Activated B cell treated with CpG ODN at 0.5 μM for 24 hours (primary cell): ENCODE measurements at regions of chr16 and their contacts with region 1.

Region 1: DNA sequence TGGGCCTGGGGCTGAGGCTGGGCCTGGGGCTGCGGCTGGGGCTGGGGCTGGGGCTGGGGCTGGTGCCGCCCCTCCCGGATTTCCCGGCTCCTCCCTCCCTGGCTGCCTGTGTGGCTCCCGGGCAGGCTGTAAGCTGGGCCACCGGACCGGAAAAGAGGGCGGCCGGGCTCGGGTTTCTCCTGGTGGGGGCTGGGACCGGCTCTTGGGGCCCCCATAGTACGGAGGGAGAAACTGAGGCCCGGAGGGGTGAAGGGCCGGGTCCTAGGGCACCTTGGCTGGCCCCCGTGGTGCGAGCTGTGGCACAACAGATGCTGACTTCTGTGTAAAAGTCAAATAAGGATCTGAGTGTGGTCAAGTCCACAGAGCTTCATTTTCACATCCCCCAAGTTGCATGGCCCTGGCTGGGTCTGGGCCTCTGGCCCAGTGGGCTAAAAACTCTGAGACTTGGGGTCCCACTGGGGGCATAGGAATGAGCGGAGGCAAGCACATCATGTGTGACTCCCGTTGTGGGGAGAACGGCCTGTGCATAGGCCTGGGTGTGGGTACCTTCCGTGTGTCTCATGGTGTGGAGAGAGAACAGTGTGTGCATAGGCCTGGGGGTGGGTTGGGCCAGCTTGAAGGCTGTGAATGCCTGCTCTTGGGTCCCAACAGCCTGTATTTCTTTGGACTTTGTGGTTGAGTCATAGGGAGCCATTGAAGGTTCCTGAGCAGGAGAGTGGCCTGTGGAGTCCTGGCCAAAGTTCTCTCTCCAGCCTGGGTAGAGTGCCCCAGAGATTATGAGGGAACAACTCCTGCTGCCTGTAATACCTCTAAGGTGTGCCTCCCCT is 123.9 kb upstream of the CIBAR2 start:
- DNase-seq: no peak
- ATAC-seq: no peak
- H3K4me3 Mint-ChIP-seq: no peak overlapping the region
- H3K27ac Mint-ChIP-seq: no peak overlapping the region
- H3K4me1 Mint-ChIP-seq: peaks cover 4% of the 10 kb centered on the region
- H3K27me3 Mint-ChIP-seq: peaks cover 22% of the 10 kb centered on the region
- CTCF ChIP-seq: no peak

Region 2: DNA sequence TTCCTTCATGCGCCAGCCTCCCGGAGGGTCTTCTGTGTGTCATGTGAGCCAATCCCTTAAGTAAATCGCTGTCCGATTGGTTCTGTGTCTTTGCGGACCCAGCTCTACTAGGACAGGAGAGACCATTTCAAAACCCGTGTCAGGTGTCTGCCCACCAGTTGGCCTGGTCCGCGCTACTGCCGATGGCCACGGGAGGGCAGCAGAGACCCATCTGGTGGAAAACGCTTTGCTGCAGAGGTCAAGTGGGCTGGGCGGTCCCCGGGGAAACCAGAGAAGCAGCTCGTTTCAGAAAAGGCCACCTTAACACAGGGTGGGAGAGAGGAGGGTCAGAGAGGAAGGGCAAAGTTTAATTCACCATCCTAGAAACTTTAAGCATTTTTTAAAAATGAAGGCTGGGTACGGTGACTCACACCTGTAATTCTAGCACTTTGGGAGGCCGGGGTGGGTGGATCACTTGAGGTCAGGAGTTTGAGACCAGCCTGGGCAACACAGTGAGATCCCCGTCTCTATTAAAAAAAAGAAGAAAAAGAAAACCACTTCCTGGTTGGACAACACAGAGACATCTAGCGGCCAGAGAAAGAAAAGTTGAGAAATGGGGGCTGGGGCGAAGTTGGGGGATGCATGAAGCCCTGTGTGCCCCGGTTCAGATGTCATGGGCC is 121.2 kb before region 1 on chr16:
- CTCF ChIA-PET with region 1: no interaction called
- POLR2A ChIA-PET with region 1: no interaction called
- intact Hi-C with region 1: loop called (anchors 1 kb)
- DNase-seq: peak; percentile 74
- ATAC-seq: peak; percentile 94
- H3K4me3 Mint-ChIP-seq: peak overlapping the region; percentile 75
- H3K27ac Mint-ChIP-seq: peak overlapping the region; percentile 43
- H3K4me1 Mint-ChIP-seq: peaks cover 6% of the 10 kb centered on the region
- H3K27me3 Mint-ChIP-seq: no peaks in the 10 kb centered on the region
- CTCF ChIP-seq: peak; percentile 88

Region 3: DNA sequence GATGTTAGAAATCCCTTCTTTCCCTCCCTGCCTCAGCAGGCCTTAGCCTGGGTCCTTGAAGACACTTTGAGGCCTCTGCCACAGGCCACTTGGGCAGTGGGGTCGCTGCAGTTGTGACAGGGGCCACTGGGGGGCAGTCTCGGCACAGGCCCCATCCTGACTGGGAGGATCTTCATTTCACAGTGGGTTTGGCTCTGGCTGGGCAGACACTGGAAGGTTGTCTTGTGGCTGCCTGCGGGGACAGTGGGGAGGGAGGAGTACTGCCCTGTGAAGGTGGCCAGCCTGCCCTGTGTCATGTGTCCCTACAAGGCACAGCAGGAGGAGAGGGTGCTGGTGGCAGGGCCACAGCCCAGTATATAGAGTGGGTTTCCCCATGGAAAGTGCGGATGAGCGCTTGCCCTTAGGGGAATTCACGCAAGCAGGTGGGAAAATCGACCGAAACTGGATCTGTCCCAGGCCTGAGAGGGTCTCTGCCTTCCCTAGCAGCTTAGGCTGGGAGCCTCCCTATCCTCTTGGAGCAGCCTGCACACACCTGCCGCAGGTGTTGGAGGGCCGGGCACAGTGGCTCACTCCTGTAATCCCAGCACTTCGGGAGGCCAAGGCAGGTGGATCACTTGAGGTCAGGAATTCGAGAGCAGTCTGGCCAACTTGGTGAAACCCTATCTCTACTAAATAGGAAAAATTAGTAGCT is 423.7 kb after region 1 on chr16:
- CTCF ChIA-PET with region 1: no interaction called
- POLR2A ChIA-PET with region 1: no interaction called
- intact Hi-C with region 1: no loop called
- DNase-seq: peak; percentile 70
- ATAC-seq: peak; percentile 97
- H3K4me3 Mint-ChIP-seq: no peak overlapping the region
- H3K27ac Mint-ChIP-seq: peak overlapping the region; percentile 67
- H3K4me1 Mint-ChIP-seq: no peaks in the 10 kb centered on the region
- H3K27me3 Mint-ChIP-seq: no peaks in the 10 kb centered on the region
- CTCF ChIP-seq: no peak